CD8-positive, alpha-beta memory T cell (primary cell): ENCODE measurements at regions of chr3 and their contacts with region 1.

Region 1: DNA sequence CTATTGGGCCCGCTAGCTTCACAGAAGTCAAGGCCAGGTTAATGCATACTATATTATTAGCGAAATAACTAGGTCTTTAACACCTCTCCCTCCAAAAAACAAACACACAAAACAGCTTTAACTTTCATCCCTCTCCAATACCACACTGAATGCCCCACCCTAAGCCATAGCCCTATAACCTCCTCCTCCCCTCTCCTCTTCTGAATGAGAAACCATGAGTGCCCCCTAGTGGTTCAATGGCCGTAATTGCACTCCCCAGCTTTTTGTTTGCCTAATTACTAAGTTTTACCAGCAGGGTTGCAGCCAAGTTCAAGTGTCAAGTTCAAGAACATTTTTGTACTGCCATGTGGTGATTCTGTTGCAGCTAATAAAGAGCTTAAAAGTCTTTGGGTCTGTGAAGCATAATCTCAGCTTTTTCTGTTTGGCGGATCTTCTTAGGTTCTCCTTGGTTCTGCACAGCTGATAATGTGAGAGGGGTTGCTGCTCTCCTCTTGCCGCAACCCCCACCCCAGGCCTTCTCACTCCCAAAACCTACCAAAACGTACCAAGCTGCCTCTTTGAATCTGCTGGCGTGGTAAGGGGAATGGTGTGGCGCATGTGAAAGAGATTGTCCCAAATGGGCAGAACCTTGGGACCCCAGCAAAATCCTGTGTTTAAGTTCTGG is 57.9 kb downstream of the RPL22L1 start:
- DNase-seq: peak; percentile 35 to 71 (median 57)
- H3K4me3 ChIP-seq: no peak overlapping the region
- H3K4me3 Mint-ChIP-seq: no peak overlapping the region
- H3K27ac ChIP-seq: no peak overlapping the region
- H3K27ac Mint-ChIP-seq: no peak overlapping the region
- H3K4me1 ChIP-seq: no peaks in the 10 kb centered on the region
- H3K4me1 Mint-ChIP-seq: peaks cover 0 to 3% (median 0%) of the 10 kb centered on the region in 3 donors
- H3K27me3 ChIP-seq: no peaks in the 10 kb centered on the region
- H3K27me3 Mint-ChIP-seq: peaks cover 0 to 1% of the 10 kb centered on the region in 2 donors

Region 2: GRCh38 chr3:170414202-170414663 is 397.8 kb before region 1 on chr3:
- CTCF ChIA-PET with region 1: interaction called, 21 read pairs
- POLR2A ChIA-PET with region 1: no interaction called
- DNase-seq: peak in 2 of 5 donors; percentile 22 to 41
- H3K4me3 ChIP-seq: no peak overlapping the region
- H3K4me3 Mint-ChIP-seq: no peak overlapping the region
- H3K27ac ChIP-seq: no peak overlapping the region
- H3K27ac Mint-ChIP-seq: no peak overlapping the region
- H3K4me1 ChIP-seq: peaks cover 4% of the 10 kb centered on the region
- H3K4me1 Mint-ChIP-seq: peaks cover 5 to 12% (median 6%) of the 10 kb centered on the region in 3 donors
- H3K27me3 ChIP-seq: peaks cover 6% of the 10 kb centered on the region
- H3K27me3 Mint-ChIP-seq: peaks cover 9 to 46% of the 10 kb centered on the region in 2 donors

Region 3: DNA sequence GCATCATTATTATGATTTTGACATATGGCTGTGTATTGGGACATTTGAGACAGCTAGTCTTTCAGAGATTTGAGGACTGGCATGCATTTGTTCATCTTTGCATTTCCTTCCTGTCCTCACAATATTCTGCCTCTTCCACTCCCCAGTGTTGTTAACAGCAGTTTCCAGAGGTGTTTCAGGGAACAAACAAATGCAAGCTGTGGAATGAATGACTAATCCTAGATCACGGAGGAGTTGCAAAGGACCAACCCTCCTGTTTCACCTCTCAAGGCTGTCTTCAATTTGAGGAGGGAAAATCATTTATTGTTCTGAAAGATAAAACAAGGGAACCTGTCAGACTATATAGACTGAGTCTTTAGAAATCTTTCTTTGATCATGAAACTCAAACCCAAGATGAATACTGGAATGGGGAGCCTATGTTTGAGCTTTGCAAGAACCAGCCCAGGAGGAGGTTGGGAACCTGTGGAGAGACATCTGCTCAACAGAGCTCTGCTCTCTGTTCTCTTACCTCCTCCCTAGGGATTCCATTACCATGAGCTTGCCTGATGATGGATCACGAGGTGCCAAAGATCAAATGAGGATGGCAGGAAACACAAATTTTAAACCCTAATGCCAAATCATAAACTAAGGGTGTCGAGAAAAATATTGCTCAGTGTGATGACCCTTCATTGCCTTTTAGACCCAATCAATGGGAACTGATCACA is 294.7 kb before region 1 on chr3:
- CTCF ChIA-PET with region 1: no interaction called
- POLR2A ChIA-PET with region 1: no interaction called
- DNase-seq: no peak
- H3K4me3 ChIP-seq: no peak overlapping the region
- H3K4me3 Mint-ChIP-seq: no peak overlapping the region
- H3K27ac ChIP-seq: no peak overlapping the region
- H3K27ac Mint-ChIP-seq: peak overlapping the region in 1 of 8 donors; percentile 38
- H3K4me1 ChIP-seq: no peaks in the 10 kb centered on the region
- H3K4me1 Mint-ChIP-seq: no peaks in the 10 kb centered on the region
- H3K27me3 ChIP-seq: no peaks in the 10 kb centered on the region
- H3K27me3 Mint-ChIP-seq: peaks cover 10 to 12% of the 10 kb centered on the region in 2 donors

Region 4: GRCh38 chr3:170760194-170760526 is 51.9 kb before region 1 on chr3:
- CTCF ChIA-PET with region 1: no interaction called
- POLR2A ChIA-PET with region 1: no interaction called
- DNase-seq: no peak
- H3K4me3 ChIP-seq: no peak overlapping the region
- H3K4me3 Mint-ChIP-seq: no peak overlapping the region
- H3K27ac ChIP-seq: no peak overlapping the region
- H3K27ac Mint-ChIP-seq: no peak overlapping the region
- H3K4me1 ChIP-seq: no peaks in the 10 kb centered on the region
- H3K4me1 Mint-ChIP-seq: no peaks in the 10 kb centered on the region
- H3K27me3 ChIP-seq: no peaks in the 10 kb centered on the region
- H3K27me3 Mint-ChIP-seq: peaks cover 1 to 3% of the 10 kb centered on the region in 2 donors